ENCODE measurements at regions of chr4 and their contacts with region 1.

Region 1: GRCh38 chr4:71713611-71714203 is 70.2 kb downstream of the GC start:
- DNase-seq: peak; percentile 10 to 32 (median 18)
- ATAC-seq: peak; percentile 62
- H3K4me3 ChIP-seq: no peak overlapping the region
- H3K27ac ChIP-seq: no peak overlapping the region
- H3K4me1 ChIP-seq: no peaks in the 10 kb centered on the region
- H3K27me3 ChIP-seq: no peaks in the 10 kb centered on the region
- CTCF ChIP-seq: peak; percentile 35 to 73 (median 52); a peak in 5 of 6 replicates
- EP300 ChIP-seq: no peak
- POLR2A ChIP-seq: no peak
- RAD21 ChIP-seq: peak; percentile 82 to 84

Region 2: DNA sequence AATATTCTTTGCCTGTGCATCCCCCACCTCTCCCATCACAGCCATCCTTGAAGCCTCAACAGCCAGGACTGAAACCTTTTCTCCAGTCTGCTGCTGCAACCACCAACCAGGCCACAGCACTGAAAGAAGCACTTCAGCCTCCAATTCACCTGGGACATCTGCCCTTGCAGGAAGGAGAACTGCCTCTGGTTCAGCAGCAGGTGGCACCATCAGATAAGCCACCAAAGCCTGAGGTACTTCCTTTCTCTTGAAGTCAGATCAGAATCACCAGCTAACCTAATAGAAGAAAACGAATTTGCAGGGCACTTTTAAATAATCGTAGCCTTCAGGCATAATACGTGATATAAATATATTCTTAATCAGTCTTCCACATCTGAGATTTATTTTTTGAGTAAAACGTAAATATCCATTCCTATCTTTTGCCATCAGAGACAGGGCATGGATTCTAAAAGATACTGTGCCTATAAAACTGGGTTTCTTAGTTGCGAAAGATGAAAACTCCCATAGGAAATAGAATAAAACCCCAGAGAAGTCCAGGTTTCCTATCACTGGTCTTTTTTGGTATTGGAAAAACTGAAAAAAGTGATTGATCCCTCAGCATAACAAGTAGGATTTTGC is 1112.2 kb before region 1 on chr4:
- CTCF ChIA-PET with region 1: interaction called, 7 read pairs
- POLR2A ChIA-PET with region 1: no interaction called
- in situ Hi-C with region 1: loop called (anchors 25 kb)
- intact Hi-C with region 1: loop called (anchors 2 kb)
- DNase-seq: peak; percentile 24 to 74 (median 30)
- ATAC-seq: peak; percentile 96
- H3K4me3 ChIP-seq: no peak overlapping the region
- H3K27ac ChIP-seq: no peak overlapping the region
- H3K4me1 ChIP-seq: no peaks in the 10 kb centered on the region; a peak in 1 of 5 replicates
- H3K27me3 ChIP-seq: no peaks in the 10 kb centered on the region
- CTCF ChIP-seq: peak; percentile 76 to 82 (median 82)
- EP300 ChIP-seq: no peak
- POLR2A ChIP-seq: no peak
- RAD21 ChIP-seq: peak; percentile 87 to 90

Region 3: GRCh38 chr4:70651864-70652506 is 1061.7 kb before region 1 on chr4:
- CTCF ChIA-PET with region 1: interaction called, 8 read pairs
- POLR2A ChIA-PET with region 1: no interaction called
- in situ Hi-C with region 1: no loop called
- intact Hi-C with region 1: loop called (anchors 5 kb)
- DNase-seq: peak in 2 of 4 experiments; percentile 24 to 41
- ATAC-seq: peak; percentile 79
- H3K4me3 ChIP-seq: no peak overlapping the region
- H3K27ac ChIP-seq: no peak overlapping the region
- H3K4me1 ChIP-seq: peaks cover 0 to 7% of the 10 kb centered on the region in 2 experiments; a peak in 1 of 5 replicates
- H3K27me3 ChIP-seq: no peaks in the 10 kb centered on the region
- CTCF ChIP-seq: peak; percentile 46 to 65 (median 52); a peak in 4 of 6 replicates
- EP300 ChIP-seq: no peak
- POLR2A ChIP-seq: no peak
- RAD21 ChIP-seq: peak; percentile 74 to 75

Region 4: DNA sequence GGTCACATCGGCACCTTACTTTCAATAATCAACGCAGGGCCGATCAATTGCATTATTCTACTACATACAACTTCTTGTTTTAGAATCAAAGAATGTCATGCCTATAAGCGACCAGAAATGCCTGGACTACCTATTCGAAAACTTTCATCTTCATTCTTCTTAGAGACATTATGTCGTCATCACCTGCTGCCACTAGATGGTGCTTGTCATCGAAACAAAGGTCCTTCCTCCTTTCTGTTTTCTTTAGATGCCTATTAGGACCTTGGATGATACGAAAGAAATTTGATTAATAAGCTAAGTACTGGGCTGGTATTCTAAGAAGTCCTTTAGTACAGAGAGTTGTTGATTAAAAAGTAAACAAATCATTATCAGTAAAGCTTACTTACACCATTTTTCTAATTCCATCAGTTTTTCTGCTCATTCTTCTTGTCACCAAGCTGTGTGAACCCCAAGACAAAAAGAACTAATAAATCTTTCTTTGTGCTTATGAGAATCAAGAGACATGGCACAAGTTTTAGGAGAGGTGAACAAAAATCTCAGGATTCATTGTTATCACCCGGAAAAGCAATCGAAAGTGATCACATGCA is 529.4 kb before region 1 on chr4:
- CTCF ChIA-PET with region 1: interaction called, 3 read pairs
- POLR2A ChIA-PET with region 1: no interaction called
- in situ Hi-C with region 1: no loop called
- intact Hi-C with region 1: loop called (anchors 5 kb)
- DNase-seq: peak; percentile 36 to 61 (median 45)
- ATAC-seq: peak; percentile 85
- H3K4me3 ChIP-seq: no peak overlapping the region
- H3K27ac ChIP-seq: no peak overlapping the region
- H3K4me1 ChIP-seq: peaks cover 0 to 14% of the 10 kb centered on the region in 2 experiments; a peak in 1 of 5 replicates
- H3K27me3 ChIP-seq: peaks cover 0 to 5% of the 10 kb centered on the region in 2 experiments; a peak in 2 of 5 replicates
- CTCF ChIP-seq: peak; percentile 41 to 73 (median 69); a peak in 5 of 6 replicates
- EP300 ChIP-seq: no peak
- POLR2A ChIP-seq: no peak
- RAD21 ChIP-seq: peak; percentile 77 to 79

Region 5: DNA sequence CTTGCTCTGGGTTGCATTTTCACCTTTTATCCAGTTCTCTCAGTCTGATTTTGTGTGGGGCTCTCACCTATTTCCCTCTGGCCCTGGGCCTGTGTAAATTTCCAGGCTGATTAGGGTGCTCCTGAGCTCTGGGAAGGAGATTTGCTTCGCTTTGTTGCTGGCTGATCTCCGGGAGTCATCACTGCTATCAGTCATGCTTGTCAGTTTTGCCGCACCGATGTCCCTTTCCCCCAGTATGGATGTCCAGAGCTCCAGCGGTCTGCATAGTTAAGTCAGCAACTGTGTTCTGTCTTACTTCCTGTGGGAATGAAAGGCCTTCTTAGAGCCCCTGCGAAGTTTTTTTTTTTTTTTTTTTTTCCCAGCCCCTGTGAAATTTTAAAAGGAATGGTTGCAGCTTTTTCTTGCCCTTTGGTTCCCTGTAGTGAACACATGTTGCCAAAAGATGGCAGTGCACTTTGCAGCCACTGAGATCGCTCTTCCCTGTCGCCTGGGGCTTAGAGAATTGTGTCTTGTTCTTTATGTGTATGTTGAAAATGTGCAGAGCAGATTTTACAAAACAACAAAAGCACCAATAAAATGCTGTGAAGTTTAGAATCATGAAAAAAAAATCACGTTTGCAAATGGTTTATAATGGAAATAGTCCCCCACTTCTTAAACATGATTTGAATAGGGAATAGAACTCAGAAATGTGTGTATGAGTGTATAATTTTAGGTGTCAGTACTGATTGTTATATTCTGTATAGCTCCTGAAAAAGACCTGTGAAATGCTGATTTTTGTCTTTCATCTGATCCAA is 484.0 kb before region 1 on chr4:
- CTCF ChIA-PET with region 1: interaction called, 4 read pairs
- POLR2A ChIA-PET with region 1: no interaction called
- in situ Hi-C with region 1: no loop called
- intact Hi-C with region 1: loop called (anchors 2 kb)
- DNase-seq: peak; percentile 13 to 37 (median 26)
- ATAC-seq: peak; percentile 80
- H3K4me3 ChIP-seq: no peak overlapping the region
- H3K27ac ChIP-seq: no peak overlapping the region
- H3K4me1 ChIP-seq: no peaks in the 10 kb centered on the region; a peak in 1 of 5 replicates
- H3K27me3 ChIP-seq: peaks cover 6 to 18% of the 10 kb centered on the region in 2 experiments; a peak in 3 of 5 replicates
- CTCF ChIP-seq: peak; percentile 50 to 61 (median 56)
- EP300 ChIP-seq: no peak
- POLR2A ChIP-seq: no peak
- RAD21 ChIP-seq: peak; percentile 24 to 44; a peak in 3 of 4 replicates

Region 6: GRCh38 chr4:71270901-71271300 is 442.8 kb before region 1 on chr4:
- CTCF ChIA-PET with region 1: interaction called, 3 read pairs
- POLR2A ChIA-PET with region 1: no interaction called
- in situ Hi-C with region 1: loop called (anchors 25 kb)
- intact Hi-C with region 1: loop called (anchors 2 kb)
- DNase-seq: peak; percentile 9 to 56 (median 12)
- ATAC-seq: peak; percentile 86
- H3K4me3 ChIP-seq: no peak overlapping the region
- H3K27ac ChIP-seq: no peak overlapping the region
- H3K4me1 ChIP-seq: no peaks in the 10 kb centered on the region
- H3K27me3 ChIP-seq: no peaks in the 10 kb centered on the region; a peak in 1 of 5 replicates
- CTCF ChIP-seq: peak; percentile 40 to 59 (median 51)
- EP300 ChIP-seq: no peak
- POLR2A ChIP-seq: no peak
- RAD21 ChIP-seq: peak; percentile 65 to 70

Region 7: GRCh38 chr4:71366766-71367165 is 346.9 kb before region 1 on chr4:
- CTCF ChIA-PET with region 1: no interaction called
- POLR2A ChIA-PET with region 1: no interaction called
- in situ Hi-C with region 1: no loop called
- intact Hi-C with region 1: no loop called
- DNase-seq: no peak
- ATAC-seq: no peak
- H3K4me3 ChIP-seq: no peak overlapping the region
- H3K27ac ChIP-seq: no peak overlapping the region
- H3K4me1 ChIP-seq: no peaks in the 10 kb centered on the region
- H3K27me3 ChIP-seq: peaks cover 0 to 2% of the 10 kb centered on the region in 2 experiments; a peak in 1 of 5 replicates
- CTCF ChIP-seq: no peak
- EP300 ChIP-seq: no peak
- POLR2A ChIP-seq: no peak
- RAD21 ChIP-seq: no peak

Region 8: GRCh38 chr4:72146211-72146610 is 432.5 kb after region 1 on chr4:
- CTCF ChIA-PET with region 1: no interaction called
- POLR2A ChIA-PET with region 1: no interaction called
- in situ Hi-C with region 1: no loop called
- intact Hi-C with region 1: no loop called
- DNase-seq: no peak
- ATAC-seq: no peak
- H3K4me3 ChIP-seq: no peak overlapping the region
- H3K27ac ChIP-seq: no peak overlapping the region
- H3K4me1 ChIP-seq: no peaks in the 10 kb centered on the region
- H3K27me3 ChIP-seq: no peaks in the 10 kb centered on the region
- CTCF ChIP-seq: no peak
- EP300 ChIP-seq: no peak
- POLR2A ChIP-seq: no peak
- RAD21 ChIP-seq: no peak

Region 9: DNA sequence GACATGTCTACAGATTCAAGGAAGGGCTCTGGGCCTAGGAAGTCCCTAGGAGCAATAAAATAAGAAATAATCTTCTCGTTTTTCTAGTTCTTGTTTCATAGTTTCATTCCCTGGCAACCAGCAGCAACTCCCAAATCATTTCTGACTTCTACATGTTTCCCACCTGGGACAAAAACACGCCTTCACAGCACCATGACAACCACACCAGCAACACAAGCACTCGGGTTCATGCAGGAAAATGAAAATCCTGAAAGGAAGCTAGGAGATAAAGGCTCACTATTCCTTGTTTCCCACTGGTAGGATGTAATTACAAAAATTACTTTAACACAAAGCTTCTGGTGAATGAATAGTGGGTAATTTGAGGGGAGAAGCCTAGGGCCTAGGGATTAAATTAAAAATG is 696.5 kb after region 1 on chr4:
- CTCF ChIA-PET with region 1: no interaction called
- POLR2A ChIA-PET with region 1: no interaction called
- in situ Hi-C with region 1: no loop called
- intact Hi-C with region 1: no loop called
- DNase-seq: no peak
- ATAC-seq: no peak
- H3K4me3 ChIP-seq: no peak overlapping the region
- H3K27ac ChIP-seq: no peak overlapping the region
- H3K4me1 ChIP-seq: no peaks in the 10 kb centered on the region
- H3K27me3 ChIP-seq: no peaks in the 10 kb centered on the region
- CTCF ChIP-seq: no peak
- EP300 ChIP-seq: no peak
- POLR2A ChIP-seq: no peak
- RAD21 ChIP-seq: no peak

Measured in K562 (cell line).